ENCODE measurements at regions of chr22 and their contacts with region 1.

Region 1: GRCh38 chr22:29435236-29436136 is 2.9 kb upstream of the RFPL1 start:
- DNase-seq: no peak
- H3K4me3 ChIP-seq: no peak overlapping the region
- H3K27ac ChIP-seq: no peak overlapping the region
- H3K4me1 ChIP-seq: no peaks in the 10 kb centered on the region
- H3K27me3 ChIP-seq: peaks cover 4% of the 10 kb centered on the region
- CTCF ChIP-seq: no peak
- POLR2A ChIP-seq: no peak

Region 2: DNA sequence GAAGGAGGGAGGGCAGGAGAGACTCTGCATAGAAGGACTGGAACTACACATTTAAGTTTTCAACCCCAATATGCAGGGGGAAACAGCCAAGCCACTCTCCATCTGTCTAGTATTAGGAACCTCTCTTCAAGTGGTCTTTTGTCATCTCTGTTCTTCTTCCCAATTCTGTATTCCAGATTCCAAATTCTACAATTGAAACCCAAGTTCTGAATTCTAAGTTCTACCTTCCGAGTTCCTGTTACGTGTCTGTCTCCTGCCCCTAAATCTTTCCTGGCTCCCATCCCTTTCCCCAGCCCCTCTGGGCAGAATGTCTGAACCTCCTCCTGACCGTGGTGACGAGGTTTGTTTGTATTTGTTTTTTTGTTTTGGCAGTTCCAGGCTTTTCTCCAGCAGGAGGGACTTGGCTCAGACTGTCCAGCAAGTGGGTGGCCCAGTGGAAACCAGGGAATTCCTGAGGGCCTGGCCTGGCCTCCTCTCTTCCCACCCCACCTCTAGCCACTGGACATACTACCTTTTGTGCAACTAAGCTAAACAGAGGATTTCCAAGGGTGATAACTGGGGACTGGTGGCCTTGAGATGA is 119.7 kb after region 1 on chr22:
- intact Hi-C with region 1: no loop called
- DNase-seq: no peak
- H3K4me3 ChIP-seq: no peak overlapping the region
- H3K27ac ChIP-seq: peak overlapping the region; percentile 77
- H3K4me1 ChIP-seq: peaks cover 9% of the 10 kb centered on the region
- H3K27me3 ChIP-seq: no peaks in the 10 kb centered on the region
- CTCF ChIP-seq: no peak
- POLR2A ChIP-seq: no peak

Region 3: DNA sequence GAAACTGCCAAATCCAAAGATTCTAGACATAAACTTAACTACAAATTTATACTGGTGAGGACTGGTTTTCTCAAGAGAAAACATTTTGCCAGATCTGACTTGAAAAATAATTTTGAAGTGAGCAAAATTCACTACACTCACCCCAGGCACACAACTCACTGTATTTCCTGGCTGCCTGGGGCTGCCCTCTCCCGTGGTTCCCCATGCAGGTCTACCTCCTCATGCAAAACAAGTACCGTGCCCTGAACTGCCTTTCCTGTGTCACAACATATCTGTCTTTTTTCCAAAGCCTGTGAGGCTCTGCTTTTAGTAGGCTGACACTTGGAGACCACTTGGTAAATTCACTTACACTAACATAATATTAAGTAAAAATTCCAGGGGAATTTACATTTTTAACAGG is 734.6 kb after region 1 on chr22:
- intact Hi-C with region 1: loop called (anchors 5 kb)
- DNase-seq: no peak
- H3K4me3 ChIP-seq: no peak overlapping the region
- H3K27ac ChIP-seq: no peak overlapping the region
- H3K4me1 ChIP-seq: no peaks in the 10 kb centered on the region
- H3K27me3 ChIP-seq: no peaks in the 10 kb centered on the region
- CTCF ChIP-seq: no peak
- POLR2A ChIP-seq: no peak

Measured in vagina (tissue), 2 donors.